ENCODE measurements at regions of chr16 and their contacts with region 1.

Region 1: GRCh38 chr16:85610508-85611332 is 2.4 kb upstream of the GSE1 start:
- DNase-seq: peak; percentile 84 to 92 (median 85)
- H3K4me3 ChIP-seq: peak overlapping the region; percentile 51
- H3K4me3 Mint-ChIP-seq: peak overlapping the region; percentile 83 to 93 (median 87)
- H3K27ac ChIP-seq: no peak overlapping the region
- H3K27ac Mint-ChIP-seq: peak overlapping the region; percentile 42 to 95 (median 83)
- H3K4me1 ChIP-seq: peaks cover 42% of the 10 kb centered on the region
- H3K4me1 Mint-ChIP-seq: peaks cover 33 to 56% (median 40%) of the 10 kb centered on the region in 3 donors
- H3K27me3 ChIP-seq: no peaks in the 10 kb centered on the region
- H3K27me3 Mint-ChIP-seq: no peaks in the 10 kb centered on the region

Region 2: GRCh38 chr16:85275533-85276249 is 335.0 kb before region 1 on chr16:
- CTCF ChIA-PET with region 1: no interaction called
- POLR2A ChIA-PET with region 1: no interaction called
- DNase-seq: peak; percentile 27 to 60 (median 40)
- H3K4me3 ChIP-seq: no peak overlapping the region
- H3K4me3 Mint-ChIP-seq: no peak overlapping the region
- H3K27ac ChIP-seq: no peak overlapping the region
- H3K27ac Mint-ChIP-seq: peak overlapping the region in 1 of 8 donors; percentile 40
- H3K4me1 ChIP-seq: no peaks in the 10 kb centered on the region
- H3K4me1 Mint-ChIP-seq: no peaks in the 10 kb centered on the region
- H3K27me3 ChIP-seq: no peaks in the 10 kb centered on the region
- H3K27me3 Mint-ChIP-seq: peaks cover 10 to 14% of the 10 kb centered on the region in 2 donors

Region 3: DNA sequence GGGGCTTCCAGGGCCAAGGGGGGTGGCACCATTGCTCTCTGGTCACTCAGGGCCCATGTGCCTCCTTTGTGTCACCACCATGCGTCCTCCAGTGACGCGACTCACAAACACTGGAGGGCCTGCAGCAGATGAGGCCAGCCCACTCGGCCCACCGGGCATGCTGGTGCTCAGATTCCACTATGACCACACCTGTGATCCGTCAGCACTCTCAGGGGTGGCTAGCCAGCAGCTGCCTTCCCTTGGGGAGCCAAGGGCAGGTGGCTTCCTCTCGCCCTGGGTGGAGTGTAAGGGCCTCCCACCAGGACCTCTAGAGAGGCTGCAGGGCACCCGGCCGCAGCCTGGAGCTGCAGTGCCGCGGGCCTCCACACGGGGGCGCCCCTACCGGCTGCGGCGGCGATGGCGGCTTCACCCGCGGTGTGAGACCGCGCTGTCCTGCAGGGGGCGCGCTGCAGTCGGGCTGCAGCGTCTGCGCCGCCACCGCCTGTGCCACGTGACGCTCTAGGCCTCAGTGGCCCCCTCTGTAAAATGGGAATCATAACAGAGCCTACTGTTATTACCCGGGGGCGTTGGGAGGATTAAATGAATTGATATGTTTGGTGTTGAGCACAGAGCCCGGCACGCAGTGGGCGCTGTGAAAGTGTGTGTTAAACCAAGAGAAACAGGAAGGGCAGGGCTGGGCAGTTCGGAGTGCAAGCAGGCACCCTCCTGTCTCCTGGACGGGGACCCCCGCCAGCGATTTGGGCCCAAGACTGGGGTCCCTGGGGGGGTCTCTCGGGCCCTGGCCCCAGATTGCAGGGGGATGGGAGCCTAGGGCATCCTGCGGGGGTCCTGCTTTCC is 190.0 kb before region 1 on chr16:
- CTCF ChIA-PET with region 1: interaction called, 205 read pairs
- POLR2A ChIA-PET with region 1: interaction called, 5 read pairs
- DNase-seq: peak; percentile 66 to 80 (median 74)
- H3K4me3 ChIP-seq: no peak overlapping the region
- H3K4me3 Mint-ChIP-seq: no peak overlapping the region
- H3K27ac ChIP-seq: no peak overlapping the region
- H3K27ac Mint-ChIP-seq: peak overlapping the region in 3 of 8 donors; percentile 29 to 47 (median 46)
- H3K4me1 ChIP-seq: peaks cover 9% of the 10 kb centered on the region
- H3K4me1 Mint-ChIP-seq: peaks cover 0 to 8% (median 2%) of the 10 kb centered on the region in 3 donors
- H3K27me3 ChIP-seq: no peaks in the 10 kb centered on the region
- H3K27me3 Mint-ChIP-seq: peaks cover 4 to 6% of the 10 kb centered on the region in 2 donors

Region 4: DNA sequence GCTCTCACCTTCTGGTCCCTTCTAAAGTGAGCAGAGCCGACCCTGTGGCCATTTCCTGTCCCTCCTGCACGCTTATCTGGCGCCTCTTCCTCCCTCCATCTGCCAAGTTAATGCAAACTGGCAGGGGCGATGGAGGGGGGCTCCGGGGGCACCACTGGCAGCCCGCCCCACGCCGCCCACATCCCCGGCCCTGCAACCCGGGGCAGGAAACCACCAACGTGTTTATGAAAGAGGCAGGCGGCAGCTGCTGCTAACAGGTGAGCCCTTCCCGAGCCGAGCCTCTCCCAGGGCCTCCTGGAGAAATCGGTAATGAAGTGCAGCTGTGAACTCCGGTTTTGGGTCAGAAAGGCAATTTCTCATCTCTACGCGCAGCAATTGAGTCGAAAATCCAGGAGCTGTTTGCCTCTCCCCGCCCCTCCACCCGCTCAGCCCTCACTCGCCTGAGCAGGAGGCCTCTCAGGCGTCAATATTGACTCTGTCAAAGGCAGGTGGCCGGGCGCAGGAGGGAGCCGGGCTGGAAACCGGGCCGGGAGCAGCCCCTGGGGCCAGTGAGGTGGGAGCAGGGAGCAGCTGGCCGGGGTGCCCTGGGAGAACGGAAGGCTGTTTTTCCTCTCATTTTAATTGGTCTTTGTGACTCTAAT is 162.0 kb before region 1 on chr16:
- CTCF ChIA-PET with region 1: interaction called, 25 read pairs
- POLR2A ChIA-PET with region 1: interaction called, 3 read pairs
- DNase-seq: peak; percentile 20 to 83 (median 66)
- H3K4me3 ChIP-seq: peak overlapping the region; percentile 19
- H3K4me3 Mint-ChIP-seq: peak overlapping the region; percentile 25 to 79 (median 77)
- H3K27ac ChIP-seq: no peak overlapping the region
- H3K27ac Mint-ChIP-seq: peak overlapping the region; percentile 85 to 93 (median 90)
- H3K4me1 ChIP-seq: peaks cover 42% of the 10 kb centered on the region
- H3K4me1 Mint-ChIP-seq: peaks cover 26 to 49% (median 36%) of the 10 kb centered on the region in 3 donors
- H3K27me3 ChIP-seq: no peaks in the 10 kb centered on the region
- H3K27me3 Mint-ChIP-seq: peaks cover 0 to 2% of the 10 kb centered on the region in 2 donors

Region 5: DNA sequence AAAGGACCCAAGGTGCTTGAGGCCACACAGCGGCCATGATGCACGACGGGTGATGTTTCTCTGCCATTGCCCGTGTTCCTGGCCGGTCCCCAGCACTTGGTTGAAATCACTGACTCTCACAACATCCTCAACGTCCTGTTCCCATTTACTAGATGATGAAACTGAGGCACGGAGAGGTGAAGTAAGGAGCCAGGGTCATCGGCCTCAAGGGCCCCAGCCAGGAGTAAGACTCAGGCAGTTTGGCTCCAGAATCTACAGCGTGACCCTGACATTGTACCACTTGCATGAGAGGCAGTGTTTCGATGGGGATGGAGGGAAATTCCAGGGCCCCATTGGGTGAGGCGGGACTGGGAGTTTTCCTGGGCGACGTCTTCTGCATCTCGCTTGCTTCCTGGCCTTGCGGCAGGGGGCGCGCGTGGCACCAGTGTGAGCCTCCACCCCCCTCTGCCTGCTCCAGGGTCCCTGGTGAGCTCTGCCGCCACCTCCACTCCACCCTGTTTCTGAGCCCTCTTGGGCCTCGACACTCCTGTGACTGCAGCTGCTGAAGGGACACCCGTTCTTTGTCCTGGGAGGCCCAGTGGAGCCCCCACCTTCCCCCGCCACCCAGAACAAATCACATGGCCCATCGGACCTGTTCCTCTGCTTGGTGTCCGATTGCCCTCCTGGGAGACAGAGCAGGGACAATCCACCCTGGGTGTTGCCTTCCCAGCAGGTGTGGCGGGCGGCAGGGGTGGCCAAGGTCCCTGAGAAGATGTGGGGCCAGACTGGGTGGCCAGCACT is 130.6 kb before region 1 on chr16:
- CTCF ChIA-PET with region 1: interaction called, 14 read pairs
- POLR2A ChIA-PET with region 1: no interaction called
- DNase-seq: peak in 3 of 5 donors; percentile 6 to 53 (median 25)
- H3K4me3 ChIP-seq: no peak overlapping the region
- H3K4me3 Mint-ChIP-seq: no peak overlapping the region
- H3K27ac ChIP-seq: no peak overlapping the region
- H3K27ac Mint-ChIP-seq: peak overlapping the region in 1 of 8 donors; percentile 14
- H3K4me1 ChIP-seq: no peaks in the 10 kb centered on the region
- H3K4me1 Mint-ChIP-seq: no peaks in the 10 kb centered on the region
- H3K27me3 ChIP-seq: no peaks in the 10 kb centered on the region
- H3K27me3 Mint-ChIP-seq: peaks cover 1 to 3% of the 10 kb centered on the region in 2 donors

Region 6: DNA sequence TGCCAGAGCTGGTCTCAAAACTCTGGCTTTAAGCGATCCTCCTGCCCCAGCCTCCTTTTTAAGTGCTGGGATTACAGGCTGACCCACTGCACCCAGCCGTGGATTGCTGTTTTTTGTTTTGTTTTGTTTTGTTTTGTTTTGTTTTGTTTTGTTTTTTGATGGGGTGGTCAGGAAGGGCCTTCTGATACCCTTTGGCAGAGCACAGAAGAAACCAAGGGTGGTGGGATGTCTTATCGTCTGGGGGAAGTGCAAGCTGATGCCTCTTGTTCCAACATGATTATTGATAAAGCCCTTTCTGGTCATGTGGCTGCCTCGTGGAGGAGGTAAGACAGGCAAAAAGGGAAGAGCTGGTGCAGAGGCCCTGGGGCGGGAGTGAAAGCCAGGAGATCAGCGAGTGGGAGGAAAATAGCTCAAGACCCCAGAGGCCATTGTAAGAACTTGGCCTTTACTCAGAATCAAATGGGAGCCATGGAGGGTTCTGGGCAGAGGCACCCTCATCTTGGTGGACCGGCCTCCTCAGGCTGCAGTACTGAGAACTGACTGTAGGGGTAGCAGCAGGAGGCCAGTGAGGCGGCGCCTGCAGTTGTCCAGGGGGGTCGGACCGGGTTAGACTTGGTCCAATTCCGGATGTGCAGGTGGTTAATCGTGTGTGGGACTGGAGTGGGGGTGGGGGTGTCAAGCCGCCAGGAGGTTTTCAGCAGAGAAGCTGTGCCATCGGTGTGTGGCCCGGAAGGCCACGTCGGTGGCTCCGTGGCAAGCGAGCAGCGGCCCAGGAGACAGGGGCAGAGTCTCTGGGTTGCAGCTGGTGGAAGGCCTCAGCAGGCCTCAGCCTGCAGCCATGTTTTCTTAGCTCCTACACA is 82.0 kb before region 1 on chr16:
- CTCF ChIA-PET with region 1: interaction called, 11 read pairs
- POLR2A ChIA-PET with region 1: interaction called, 3 read pairs
- DNase-seq: peak in 2 of 5 donors; percentile 9 to 13
- H3K4me3 ChIP-seq: no peak overlapping the region
- H3K4me3 Mint-ChIP-seq: no peak overlapping the region
- H3K27ac ChIP-seq: peak overlapping the region; percentile 51
- H3K27ac Mint-ChIP-seq: peak overlapping the region in 1 of 8 donors; percentile 29
- H3K4me1 ChIP-seq: no peaks in the 10 kb centered on the region
- H3K4me1 Mint-ChIP-seq: no peaks in the 10 kb centered on the region
- H3K27me3 ChIP-seq: no peaks in the 10 kb centered on the region
- H3K27me3 Mint-ChIP-seq: peaks cover 0 to 4% of the 10 kb centered on the region in 2 donors

Measured in CD8-positive, alpha-beta memory T cell (primary cell).